Activated B cell treated with CpG ODN at 0.5 μM for 24 hours (primary cell): ENCODE measurements at regions of chr1 and their contacts with region 1.

Region 1: DNA sequence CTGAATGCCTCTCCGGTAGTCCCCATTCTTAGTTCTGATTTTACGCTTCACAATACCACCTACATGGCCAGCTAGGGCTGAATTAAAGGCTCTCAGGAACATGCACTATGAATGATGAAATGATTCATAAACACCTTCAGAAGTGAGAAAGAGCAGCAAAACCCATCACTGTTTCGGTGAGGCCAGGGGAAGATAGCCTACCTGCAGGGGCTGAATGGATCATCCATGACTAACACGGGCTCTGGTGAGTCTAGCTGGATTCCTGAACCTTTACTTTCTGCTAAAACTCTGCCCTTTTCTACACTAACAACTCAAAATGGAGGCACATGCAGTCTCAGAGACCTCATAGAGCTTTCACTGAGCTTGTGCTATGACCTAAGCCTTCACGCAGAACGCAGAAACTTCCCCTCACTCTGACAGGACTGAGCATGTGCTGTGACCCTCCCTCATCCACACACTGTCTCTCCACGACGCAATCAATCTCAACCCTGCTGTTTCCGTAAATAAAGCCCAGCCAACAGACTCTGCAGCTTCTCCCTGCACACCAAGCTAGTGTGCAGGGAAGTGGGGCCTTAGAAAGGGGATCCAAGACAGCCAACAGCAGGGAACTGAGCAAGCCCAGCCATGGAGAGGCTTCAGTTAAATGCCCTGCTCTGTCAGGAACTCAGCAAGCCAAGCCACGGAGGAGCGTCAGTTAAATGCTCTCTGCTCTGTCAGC is 207.8 kb downstream of the SLC45A1 start:
- DNase-seq: peak; percentile 35
- ATAC-seq: peak; percentile 94
- H3K4me3 Mint-ChIP-seq: no peak overlapping the region
- H3K27ac Mint-ChIP-seq: no peak overlapping the region
- H3K4me1 Mint-ChIP-seq: peaks cover 27% of the 10 kb centered on the region
- H3K27me3 Mint-ChIP-seq: no peaks in the 10 kb centered on the region
- CTCF ChIP-seq: no peak

Region 2: GRCh38 chr1:8317647-8318381 is 207.9 kb before region 1 on chr1 and contains the start of gene SLC45A1:
- CTCF ChIA-PET with region 1: no interaction called
- POLR2A ChIA-PET with region 1: no interaction called
- intact Hi-C with region 1: no loop called
- DNase-seq: peak; percentile 74
- ATAC-seq: peak; percentile 89
- H3K4me3 Mint-ChIP-seq: peak within 1 kb of the TSS; percentile 80
- H3K27ac Mint-ChIP-seq: no peak within 1 kb of the TSS
- H3K4me1 Mint-ChIP-seq: peaks cover 14% of the 10 kb centered on the region
- H3K27me3 Mint-ChIP-seq: peaks cover 40% of the 10 kb centered on the region
- CTCF ChIP-seq: no peak
- total RNA-seq, gene SLC45A1: 0.33 and 0.34 TPM in 2 replicates

Region 3: GRCh38 chr1:8396786-8397406 is 128.8 kb before region 1 on chr1:
- CTCF ChIA-PET with region 1: no interaction called
- POLR2A ChIA-PET with region 1: interaction called, 11 read pairs
- intact Hi-C with region 1: no loop called
- DNase-seq: no peak
- ATAC-seq: peak; percentile 4
- H3K4me3 Mint-ChIP-seq: peak overlapping the region; percentile 24
- H3K27ac Mint-ChIP-seq: peak overlapping the region; percentile 82
- H3K4me1 Mint-ChIP-seq: peaks cover 72% of the 10 kb centered on the region
- H3K27me3 Mint-ChIP-seq: no peaks in the 10 kb centered on the region
- CTCF ChIP-seq: no peak

Region 4: DNA sequence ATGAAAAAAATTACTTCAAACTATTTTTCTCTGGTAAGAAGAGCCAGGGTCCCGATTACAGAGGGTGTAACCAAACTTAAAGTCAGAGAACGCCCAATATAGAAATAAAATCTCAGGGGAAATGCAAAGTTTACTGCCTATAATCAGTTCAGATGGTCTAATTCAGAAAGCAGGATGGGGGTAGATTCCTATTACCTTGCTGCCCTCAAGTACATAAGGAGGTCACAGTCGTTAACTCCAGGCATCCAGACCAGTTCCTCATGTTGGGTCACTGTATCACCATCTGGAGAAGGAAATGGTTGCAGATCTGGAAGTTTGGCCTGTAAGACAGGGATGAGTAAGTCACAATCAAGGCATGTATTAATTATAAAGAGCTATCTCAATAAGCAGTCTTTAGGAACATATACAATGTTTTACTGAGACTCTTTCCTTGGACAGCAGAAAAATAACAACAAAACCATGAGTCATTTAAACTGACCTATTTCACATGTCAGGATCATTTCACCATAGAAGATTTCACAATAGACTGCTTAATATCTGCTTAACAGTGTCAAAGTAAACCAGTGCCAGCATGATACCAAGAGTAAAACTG is 28.4 kb before region 1 on chr1:
- CTCF ChIA-PET with region 1: no interaction called
- POLR2A ChIA-PET with region 1: interaction called, 11 read pairs
- intact Hi-C with region 1: loop called (anchors 2 kb)
- DNase-seq: no peak
- ATAC-seq: peak; percentile 57
- H3K4me3 Mint-ChIP-seq: peak overlapping the region; percentile 46
- H3K27ac Mint-ChIP-seq: peak overlapping the region; percentile 93
- H3K4me1 Mint-ChIP-seq: peaks cover 63% of the 10 kb centered on the region
- H3K27me3 Mint-ChIP-seq: no peaks in the 10 kb centered on the region
- CTCF ChIP-seq: no peak

Region 5: GRCh38 chr1:8510041-8510823 is 15.5 kb before region 1 on chr1:
- CTCF ChIA-PET with region 1: interaction called, 4 read pairs
- POLR2A ChIA-PET with region 1: interaction called, 8 read pairs
- intact Hi-C with region 1: loop called (anchors 2 kb)
- DNase-seq: no peak
- ATAC-seq: peak; percentile 65
- H3K4me3 Mint-ChIP-seq: peak overlapping the region; percentile 75
- H3K27ac Mint-ChIP-seq: peak overlapping the region; percentile 87
- H3K4me1 Mint-ChIP-seq: peaks cover 45% of the 10 kb centered on the region
- H3K27me3 Mint-ChIP-seq: no peaks in the 10 kb centered on the region
- CTCF ChIP-seq: no peak

Region 6: GRCh38 chr1:8590526-8591351 is 65.0 kb after region 1 on chr1:
- CTCF ChIA-PET with region 1: no interaction called
- POLR2A ChIA-PET with region 1: no interaction called
- intact Hi-C with region 1: no loop called
- DNase-seq: no peak
- ATAC-seq: no peak
- H3K4me3 Mint-ChIP-seq: no peak overlapping the region
- H3K27ac Mint-ChIP-seq: peak overlapping the region; percentile 62
- H3K4me1 Mint-ChIP-seq: peaks cover 31% of the 10 kb centered on the region
- H3K27me3 Mint-ChIP-seq: no peaks in the 10 kb centered on the region
- CTCF ChIP-seq: no peak